Tibial artery (tissue), 4 donors: ENCODE measurements at regions of chr6 and their contacts with region 1.

Region 1: GRCh38 chr6:126804332-126805064 is 314.0 kb upstream of the RSPO3 start:
- DNase-seq: no peak
- H3K4me3 ChIP-seq: no peak overlapping the region
- H3K27ac ChIP-seq: no peak overlapping the region
- H3K4me1 ChIP-seq: no peaks in the 10 kb centered on the region
- H3K27me3 ChIP-seq: no peaks in the 10 kb centered on the region
- CTCF ChIP-seq: peak; percentile 60 to 73

Region 2: GRCh38 chr6:126721581-126722145 is 82.8 kb before region 1 on chr6:
- intact Hi-C with region 1: no loop called
- DNase-seq: no peak
- H3K4me3 ChIP-seq: no peak overlapping the region
- H3K27ac ChIP-seq: no peak overlapping the region
- H3K4me1 ChIP-seq: no peaks in the 10 kb centered on the region
- H3K27me3 ChIP-seq: no peaks in the 10 kb centered on the region
- CTCF ChIP-seq: no peak

Region 3: DNA sequence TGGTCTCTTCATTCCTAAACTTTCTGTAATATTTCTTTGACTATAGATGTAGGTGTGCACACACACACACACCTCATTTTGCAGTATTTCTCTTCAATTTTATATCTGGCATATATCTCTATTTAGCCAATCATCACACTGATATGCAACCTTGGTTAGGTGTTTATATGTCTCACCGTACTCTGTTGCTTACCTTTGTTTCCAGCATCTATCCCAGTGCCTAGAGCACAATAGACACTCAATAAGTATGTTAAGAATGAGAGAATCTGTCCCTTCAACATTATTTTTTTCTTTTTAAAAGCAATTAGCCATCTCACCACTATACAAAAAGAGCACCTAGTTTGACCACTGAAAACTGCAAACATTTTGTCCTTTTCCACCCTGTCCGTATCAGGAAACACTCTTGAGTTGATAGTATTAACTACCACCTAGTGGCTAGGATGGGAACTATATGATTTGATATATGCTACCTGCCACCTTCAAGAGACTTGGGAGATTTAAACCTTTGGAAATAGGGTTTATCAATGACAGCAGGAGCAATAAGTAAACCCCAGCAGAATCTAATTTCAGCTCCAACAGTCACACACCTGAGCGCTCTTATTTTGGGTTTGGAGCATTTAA is 265.3 kb after region 1 on chr6:
- intact Hi-C with region 1: loop called (anchors 10 kb)
- DNase-seq: no peak
- H3K4me3 ChIP-seq: no peak overlapping the region
- H3K27ac ChIP-seq: no peak overlapping the region
- H3K4me1 ChIP-seq: no peaks in the 10 kb centered on the region
- H3K27me3 ChIP-seq: no peaks in the 10 kb centered on the region
- CTCF ChIP-seq: peak; percentile 42 to 51